Ascending aorta (tissue), 2 donors: ENCODE measurements at regions of chr11 and their contacts with region 1.

Region 1: GRCh38 chr11:33257897-33258630 is 883 bp downstream of the HIPK3 start:
- DNase-seq: peak; percentile 35 to 94
- H3K4me3 ChIP-seq: peak overlapping the region; percentile 91 to 94
- H3K27ac ChIP-seq: peak overlapping the region; percentile 100
- H3K4me1 ChIP-seq: peaks cover 0 to 27% of the 10 kb centered on the region in 2 donors
- H3K27me3 ChIP-seq: no peaks in the 10 kb centered on the region
- CTCF ChIP-seq: peak in 2 of 3 experiments; percentile 35 to 42

Region 2: DNA sequence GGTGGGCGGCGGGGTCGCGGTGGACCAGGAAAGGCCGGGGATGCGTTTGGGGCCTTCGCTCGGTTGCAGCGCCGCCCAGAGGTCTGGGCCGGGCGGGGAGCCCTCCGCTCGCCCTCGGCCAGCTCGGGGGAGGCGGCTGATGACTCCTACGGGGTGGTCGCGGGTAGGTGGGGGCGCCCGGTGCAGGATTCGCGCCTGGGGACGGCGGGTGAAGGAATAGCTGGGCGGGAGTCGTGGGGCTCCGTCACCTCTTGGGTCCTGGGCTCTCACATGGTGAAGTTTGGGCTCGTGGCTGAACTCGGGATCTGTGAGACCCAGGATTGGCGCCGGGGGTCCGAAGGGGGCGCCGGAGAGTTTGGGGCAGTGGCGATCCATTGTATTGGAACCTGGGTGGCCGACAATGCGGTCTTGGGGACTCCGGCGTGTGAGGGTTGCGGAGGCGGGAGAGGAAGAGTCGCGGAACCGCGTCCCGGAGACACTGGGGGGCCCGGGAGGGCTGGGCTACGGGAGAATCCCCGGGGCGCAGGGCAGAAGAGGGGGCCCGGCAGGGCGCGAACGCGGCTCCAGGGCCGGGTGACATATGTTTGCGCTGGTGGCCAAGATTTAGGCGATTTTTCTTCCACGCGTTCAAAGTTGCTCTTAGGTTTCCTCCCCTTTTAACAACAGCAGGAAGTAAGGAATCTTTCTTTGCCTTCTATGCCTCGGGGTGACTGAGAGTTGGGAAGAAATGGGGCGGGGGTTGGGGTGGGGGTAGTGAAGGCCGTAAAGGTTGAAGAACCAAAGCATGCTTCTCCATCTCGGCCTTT is 364.5 kb before region 1 on chr11:
- intact Hi-C with region 1: loop called (anchors 5 kb)
- DNase-seq: peak in 1 of 2 donors; percentile 66
- H3K4me3 ChIP-seq: peak overlapping the region; percentile 84 to 85
- H3K27ac ChIP-seq: peak overlapping the region; percentile 83 to 87
- H3K4me1 ChIP-seq: no peaks in the 10 kb centered on the region
- H3K27me3 ChIP-seq: no peaks in the 10 kb centered on the region
- CTCF ChIP-seq: peak in 2 of 3 experiments; percentile 55 to 69

Region 3: DNA sequence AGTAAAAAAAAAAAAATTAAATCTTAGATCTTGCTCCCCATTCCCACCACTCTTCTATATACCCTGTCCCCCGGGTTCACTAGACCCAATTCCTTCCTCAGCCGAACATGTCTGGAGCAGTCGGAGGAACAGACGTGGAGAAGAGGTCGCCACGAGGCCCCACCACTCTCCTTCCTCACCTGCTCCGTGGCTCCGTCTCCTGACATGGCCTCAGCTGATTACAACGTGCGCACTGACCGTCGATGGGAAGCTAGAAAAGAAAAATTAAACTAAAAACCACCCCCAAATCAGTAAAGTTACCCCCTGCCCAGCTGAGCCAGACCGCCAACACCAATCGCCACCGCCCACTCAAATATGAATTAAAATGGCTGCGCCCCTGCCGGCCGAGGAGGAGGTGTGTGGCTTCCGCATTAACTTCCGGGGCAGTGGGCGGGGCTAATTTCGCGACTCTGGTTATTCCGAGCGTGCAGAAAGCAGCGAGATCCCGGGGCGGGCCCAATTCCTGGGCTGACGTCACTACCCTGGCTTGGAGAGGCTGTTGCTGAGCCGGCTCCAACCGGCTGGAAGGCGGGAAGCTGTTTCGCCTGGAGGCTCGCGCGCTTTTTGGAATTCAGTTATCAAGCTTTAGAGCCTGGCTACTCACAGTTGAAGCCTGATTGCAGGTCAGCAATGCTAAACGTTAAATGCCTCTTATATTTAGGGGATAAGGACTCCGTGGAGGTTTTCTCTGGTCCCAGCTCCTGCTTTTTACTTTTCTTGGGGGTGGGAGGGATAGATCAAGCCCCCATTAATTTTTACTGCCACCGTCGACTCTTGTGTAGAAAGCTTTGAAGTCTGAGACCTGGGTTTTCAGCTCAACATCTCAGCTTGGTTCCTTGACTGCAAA is 96.7 kb before region 1 on chr11 and contains the start of gene CSTF3:
- intact Hi-C with region 1: loop called (anchors 2 kb)
- DNase-seq: peak; percentile 98 to 100
- H3K4me3 ChIP-seq: peak within 1 kb of the TSS; percentile 77 to 88
- H3K27ac ChIP-seq: peak within 1 kb of the TSS; percentile 67 to 82
- H3K4me1 ChIP-seq: peaks cover 8 to 13% of the 10 kb centered on the region in 2 donors
- H3K27me3 ChIP-seq: no peaks in the 10 kb centered on the region
- CTCF ChIP-seq: peak; percentile 16 to 78 (median 54)
- total RNA-seq, gene CSTF3: 3.8 TPM

Region 4: DNA sequence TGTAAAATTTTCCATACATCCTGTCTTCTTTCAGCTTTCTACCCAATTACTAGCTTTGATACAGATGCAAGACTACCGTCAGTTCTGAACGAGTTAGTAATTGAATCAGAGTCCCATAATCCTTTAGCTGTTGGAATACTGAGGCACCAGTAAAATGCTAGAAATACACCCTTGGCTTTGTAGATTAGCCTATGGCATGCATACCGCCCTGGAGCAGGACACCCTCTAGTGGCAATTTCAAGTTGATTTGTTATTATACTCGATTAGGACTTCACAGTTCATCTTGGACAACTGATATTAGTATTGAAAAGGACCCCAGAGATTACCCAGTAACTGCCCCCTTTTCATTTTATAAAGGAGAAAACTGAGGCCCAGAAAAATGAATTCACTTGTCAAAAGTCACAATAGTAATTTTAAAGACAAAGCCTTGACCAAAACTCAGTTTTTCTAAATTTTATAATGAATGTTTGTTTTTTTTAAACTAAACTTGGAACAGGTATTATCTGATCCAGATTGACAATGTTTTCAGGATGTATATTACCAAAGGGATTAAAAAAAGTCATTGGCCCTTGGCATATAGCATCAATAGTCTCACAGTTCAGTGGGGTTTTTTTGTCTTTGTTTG is 71.8 kb after region 1 on chr11:
- intact Hi-C with region 1: loop called (anchors 5 kb)
- DNase-seq: no peak
- H3K4me3 ChIP-seq: no peak overlapping the region
- H3K27ac ChIP-seq: no peak overlapping the region
- H3K4me1 ChIP-seq: peaks cover 0 to 24% of the 10 kb centered on the region in 2 donors
- H3K27me3 ChIP-seq: no peaks in the 10 kb centered on the region
- CTCF ChIP-seq: peak; percentile 15 to 52 (median 46)

Region 5: GRCh38 chr11:33736148-33736809 is 478.2 kb after region 1 on chr11 and contains the start of gene CD59:
- intact Hi-C with region 1: loop called (anchors 5 kb)
- DNase-seq: peak; percentile 84 to 97
- H3K4me3 ChIP-seq: peak within 1 kb of the TSS; percentile 89 to 95
- H3K27ac ChIP-seq: peak within 1 kb of the TSS; percentile 92 to 93
- H3K4me1 ChIP-seq: no peaks in the 10 kb centered on the region
- H3K27me3 ChIP-seq: no peaks in the 10 kb centered on the region
- CTCF ChIP-seq: no peak
- total RNA-seq, gene CD59: 637 TPM

Region 6: DNA sequence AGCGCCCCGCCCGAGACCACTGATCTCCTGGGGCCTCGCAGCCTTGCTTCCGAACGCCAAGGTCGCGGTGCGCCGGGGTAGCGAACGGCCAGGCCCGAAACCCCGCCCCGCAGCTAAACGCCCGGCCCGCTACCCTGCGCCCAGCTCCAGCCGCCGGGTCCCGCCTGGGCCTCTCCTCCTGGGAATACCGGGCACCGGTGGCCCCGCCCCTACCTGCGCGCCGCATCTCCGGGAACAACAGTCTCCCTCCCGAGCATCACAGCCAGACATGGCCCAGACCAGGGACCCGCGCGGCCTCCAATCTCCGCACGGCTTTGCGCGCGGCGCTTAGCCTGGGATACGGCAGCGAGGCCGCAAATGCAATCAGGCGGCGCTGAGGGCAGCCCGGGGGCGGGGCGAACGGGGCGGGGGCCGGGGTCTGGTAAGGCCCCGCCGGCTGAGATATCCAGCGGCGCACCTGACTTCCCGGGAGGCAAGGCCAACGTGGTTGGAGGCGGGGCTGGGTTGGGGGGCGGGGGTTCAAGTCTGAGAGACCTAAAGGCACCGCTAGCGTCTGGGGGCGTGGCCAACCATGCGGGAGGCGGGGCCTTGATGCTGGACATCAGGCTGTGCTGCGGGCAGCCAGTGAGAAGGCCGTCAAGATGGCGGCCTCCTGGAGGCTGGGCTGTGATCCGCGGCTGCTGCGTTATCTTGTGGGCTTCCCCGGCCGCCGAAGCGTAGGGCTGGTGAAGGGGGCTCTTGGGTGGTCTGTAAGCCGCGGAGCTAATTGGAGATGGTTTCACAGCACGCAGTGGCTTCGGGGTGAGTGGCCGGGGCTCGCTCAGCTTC is 1658.2 kb after region 1 on chr11 and contains the starts of genes APIP and PDHX:
- intact Hi-C with region 1: loop called (anchors 10 kb)
- DNase-seq: peak; percentile 97 to 99
- H3K4me3 ChIP-seq: peak within 1 kb of the TSS; percentile 78 to 97
- H3K27ac ChIP-seq: peak within 1 kb of the TSS; percentile 92 to 97
- H3K4me1 ChIP-seq: peaks cover 4 to 14% of the 10 kb centered on the region in 2 donors
- H3K27me3 ChIP-seq: no peaks in the 10 kb centered on the region
- CTCF ChIP-seq: no peak
- total RNA-seq, gene APIP: 3.6 TPM
- total RNA-seq, gene PDHX: 23.3 TPM